HCT116 (cell line): ENCODE measurements at regions of chr2 and their contacts with region 1.

Region 1: GRCh38 chr2:224357098-224357901 is 44.6 kb downstream of the FAM124B start:
- DNase-seq: peak; percentile 44
- ATAC-seq: peak; percentile 83
- H3K4me3 ChIP-seq: no peak overlapping the region
- H3K27ac ChIP-seq: no peak overlapping the region
- H3K4me1 ChIP-seq: 0 out of 4 replicates have a peak, but pooled peaks cover 0 to 4% of the 10 kb centered on the region in 2 experiments
- H3K27me3 ChIP-seq: no peaks in the 10 kb centered on the region
- CTCF ChIP-seq: peak; percentile 62 to 91 (median 85); a peak in 5 of 6 replicates
- POLR2A ChIP-seq: no peak
- RAD21 ChIP-seq: peak; percentile 92

Region 2: GRCh38 chr2:224650815-224651439 is 293.6 kb after region 1 on chr2:
- CTCF ChIA-PET with region 1: interaction called, 8 read pairs
- POLR2A ChIA-PET with region 1: no interaction called
- RAD21 ChIA-PET with region 1: no interaction called
- intact Hi-C with region 1: loop called (anchors 1 kb)
- DNase-seq: peak; percentile 53
- ATAC-seq: peak; percentile 87
- H3K4me3 ChIP-seq: no peak overlapping the region
- H3K27ac ChIP-seq: no peak overlapping the region
- H3K4me1 ChIP-seq: peaks cover 0 to 2% of the 10 kb centered on the region in 2 experiments; a peak in 1 of 4 replicates
- H3K27me3 ChIP-seq: no peaks in the 10 kb centered on the region
- CTCF ChIP-seq: peak; percentile 72 to 90 (median 77); a peak in 5 of 6 replicates
- POLR2A ChIP-seq: no peak
- RAD21 ChIP-seq: peak; percentile 88